ENCODE measurements at regions of chr2 and their contacts with region 1.

Region 1: GRCh38 chr2:196252408-196253115 is 81.2 kb upstream of the STK17B start:
- DNase-seq: peak; percentile 42
- H3K4me3 Mint-ChIP-seq: no peak overlapping the region
- H3K27ac Mint-ChIP-seq: peak overlapping the region; percentile 82
- H3K4me1 Mint-ChIP-seq: peaks cover 81% of the 10 kb centered on the region
- H3K27me3 Mint-ChIP-seq: no peaks in the 10 kb centered on the region

Region 2: DNA sequence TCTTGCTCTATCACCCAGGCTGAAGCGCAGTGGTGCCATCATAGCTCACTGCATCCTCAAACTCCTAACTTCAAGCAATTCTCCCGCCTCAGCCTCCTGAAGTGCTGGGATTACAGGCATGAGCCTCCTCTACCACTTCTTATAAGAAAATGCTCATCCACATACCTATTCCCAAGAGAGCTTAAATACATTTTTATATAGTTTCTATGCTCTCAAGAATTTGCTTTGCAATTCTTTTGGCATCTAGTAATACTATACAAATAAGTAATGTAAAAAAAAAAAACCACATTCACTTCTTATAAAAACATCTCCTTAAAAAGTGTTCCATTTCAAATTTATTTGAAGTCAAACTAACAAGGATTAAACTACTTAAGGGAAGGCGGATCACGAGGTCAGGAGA is 381.2 kb before region 1 on chr2:
- CTCF ChIA-PET with region 1: no interaction called
- intact Hi-C with region 1: no loop called
- DNase-seq: no peak
- H3K4me3 Mint-ChIP-seq: no peak overlapping the region
- H3K27ac Mint-ChIP-seq: no peak overlapping the region
- H3K4me1 Mint-ChIP-seq: no peaks in the 10 kb centered on the region
- H3K27me3 Mint-ChIP-seq: no peaks in the 10 kb centered on the region

Region 3: DNA sequence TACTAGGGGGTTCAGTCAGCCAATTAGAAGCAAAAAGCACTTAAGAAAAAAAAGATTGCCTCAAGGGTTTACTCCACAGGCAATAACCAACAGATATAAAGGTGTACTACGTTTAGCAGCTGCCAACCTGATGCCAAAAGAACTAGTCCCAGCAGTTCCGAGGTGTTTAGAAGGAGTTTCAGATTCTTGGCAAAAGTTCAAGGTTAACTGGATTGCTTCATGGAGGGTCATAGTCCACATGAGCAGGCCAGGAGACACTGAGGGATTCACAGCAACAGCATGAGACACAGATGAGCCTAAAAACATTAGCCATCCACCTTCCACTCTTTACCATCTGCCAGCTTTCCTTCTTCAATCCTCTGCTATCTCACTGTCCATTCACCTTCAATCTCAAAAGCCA is 179.0 kb before region 1 on chr2:
- CTCF ChIA-PET with region 1: no interaction called
- intact Hi-C with region 1: no loop called
- DNase-seq: no peak
- H3K4me3 Mint-ChIP-seq: no peak overlapping the region
- H3K27ac Mint-ChIP-seq: no peak overlapping the region
- H3K4me1 Mint-ChIP-seq: peaks cover 4% of the 10 kb centered on the region
- H3K27me3 Mint-ChIP-seq: no peaks in the 10 kb centered on the region

Region 4: DNA sequence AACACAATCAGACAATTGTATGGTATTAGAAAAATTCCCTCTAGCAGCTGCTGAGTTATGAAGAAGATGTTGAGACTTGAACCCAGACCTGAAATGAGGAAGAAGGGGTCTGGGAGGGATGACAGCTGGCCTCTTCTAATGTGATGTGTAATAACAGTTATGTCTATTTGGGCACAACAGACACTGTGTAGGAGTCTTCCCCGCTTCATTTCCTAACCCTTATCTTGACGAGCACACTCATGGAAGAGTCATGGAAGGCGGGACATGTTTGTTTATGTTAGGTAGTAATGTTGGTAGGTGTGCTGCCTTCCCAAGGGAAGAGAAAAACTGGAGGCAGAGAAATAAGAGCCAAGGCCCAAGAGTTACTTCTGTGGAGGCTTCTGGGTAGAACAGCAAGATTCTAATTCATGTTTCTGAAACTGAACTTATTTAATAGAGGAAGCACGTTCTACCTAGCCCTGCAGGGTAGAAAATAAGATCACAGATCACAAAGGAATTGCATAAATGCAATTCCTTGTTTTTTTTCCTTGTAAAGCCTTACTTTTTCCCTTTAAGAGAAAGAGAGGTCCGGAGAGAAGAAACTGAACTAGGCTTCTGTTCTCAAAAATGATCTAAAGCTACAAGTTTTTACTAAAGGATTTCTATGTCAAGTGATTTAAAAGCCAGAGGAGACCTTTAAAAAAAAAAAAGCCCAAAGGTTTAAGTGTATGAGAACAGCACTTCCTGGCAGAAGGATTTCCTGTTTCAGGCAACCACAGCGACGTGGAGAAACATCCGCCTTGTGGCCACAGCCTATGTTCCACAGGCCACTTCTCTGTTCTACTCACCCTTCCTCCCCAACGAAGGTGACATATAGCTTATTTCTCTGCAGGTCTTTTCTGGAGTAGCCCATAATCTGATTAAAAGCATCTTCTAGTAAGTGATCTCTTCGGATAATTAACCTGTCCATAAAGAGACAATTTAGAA is 12.7 kb before region 1 on chr2:
- CTCF ChIA-PET with region 1: interaction called, 6 read pairs
- intact Hi-C with region 1: loop called (anchors 1 kb)
- DNase-seq: peak; percentile 93
- H3K4me3 Mint-ChIP-seq: peak overlapping the region; percentile 49
- H3K27ac Mint-ChIP-seq: peak overlapping the region; percentile 88
- H3K4me1 Mint-ChIP-seq: peaks cover 85% of the 10 kb centered on the region
- H3K27me3 Mint-ChIP-seq: no peaks in the 10 kb centered on the region

Region 5: DNA sequence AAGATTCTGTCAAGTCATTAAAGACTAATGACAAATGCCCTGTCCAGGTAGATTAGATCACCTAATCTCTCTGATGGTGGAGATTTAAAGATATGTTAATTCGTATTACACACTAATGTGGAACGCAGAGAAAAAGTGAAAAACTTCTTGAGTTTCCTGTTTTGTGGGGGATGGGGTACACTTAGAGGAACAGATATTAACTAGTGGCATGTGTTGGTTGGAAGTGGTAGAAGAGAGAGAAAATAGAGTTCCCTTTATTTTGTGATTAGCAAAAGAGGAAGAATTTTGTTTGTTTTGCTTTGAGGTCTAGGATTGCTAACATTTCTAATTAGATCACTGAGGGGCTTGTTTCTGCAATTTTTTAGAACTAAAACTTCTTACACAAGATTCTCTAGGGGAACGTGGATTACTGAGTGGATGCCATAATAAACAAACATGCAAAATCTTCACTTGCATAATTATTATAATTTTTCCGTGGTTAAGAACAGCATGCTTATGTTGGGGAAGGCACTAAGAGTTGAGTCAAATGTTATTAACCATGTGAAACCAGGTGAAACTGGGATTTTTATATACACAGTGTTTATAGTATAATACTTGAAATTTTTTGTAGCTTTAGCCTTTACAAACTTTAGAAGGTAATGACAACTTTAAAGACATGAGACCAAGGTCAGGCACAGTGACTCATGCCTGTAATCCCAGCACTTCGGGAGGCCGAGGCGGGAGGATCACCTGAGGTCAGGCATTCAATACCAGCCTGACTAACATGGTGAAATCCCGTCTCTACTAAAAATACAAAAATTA is 16.2 kb after region 1 on chr2:
- CTCF ChIA-PET with region 1: interaction called, 4 read pairs
- intact Hi-C with region 1: loop called (anchors 1 kb)
- DNase-seq: no peak
- H3K4me3 Mint-ChIP-seq: peak overlapping the region; percentile 52
- H3K27ac Mint-ChIP-seq: peak overlapping the region; percentile 65
- H3K4me1 Mint-ChIP-seq: peaks cover 64% of the 10 kb centered on the region
- H3K27me3 Mint-ChIP-seq: no peaks in the 10 kb centered on the region

Region 6: GRCh38 chr2:196286821-196287220 is 34.3 kb after region 1 on chr2:
- CTCF ChIA-PET with region 1: interaction called, 3 read pairs
- intact Hi-C with region 1: loop called (anchors 1 kb)
- DNase-seq: no peak
- H3K4me3 Mint-ChIP-seq: no peak overlapping the region
- H3K27ac Mint-ChIP-seq: no peak overlapping the region
- H3K4me1 Mint-ChIP-seq: peaks cover 73% of the 10 kb centered on the region
- H3K27me3 Mint-ChIP-seq: no peaks in the 10 kb centered on the region

Measured in activated naive CD4-positive, alpha-beta T cell treated with anti-CD3 and anti-CD28 coated beads for 36 hours (primary cell).